ENCODE measurements at regions of chr5 and their contacts with region 1.

Region 1: DNA sequence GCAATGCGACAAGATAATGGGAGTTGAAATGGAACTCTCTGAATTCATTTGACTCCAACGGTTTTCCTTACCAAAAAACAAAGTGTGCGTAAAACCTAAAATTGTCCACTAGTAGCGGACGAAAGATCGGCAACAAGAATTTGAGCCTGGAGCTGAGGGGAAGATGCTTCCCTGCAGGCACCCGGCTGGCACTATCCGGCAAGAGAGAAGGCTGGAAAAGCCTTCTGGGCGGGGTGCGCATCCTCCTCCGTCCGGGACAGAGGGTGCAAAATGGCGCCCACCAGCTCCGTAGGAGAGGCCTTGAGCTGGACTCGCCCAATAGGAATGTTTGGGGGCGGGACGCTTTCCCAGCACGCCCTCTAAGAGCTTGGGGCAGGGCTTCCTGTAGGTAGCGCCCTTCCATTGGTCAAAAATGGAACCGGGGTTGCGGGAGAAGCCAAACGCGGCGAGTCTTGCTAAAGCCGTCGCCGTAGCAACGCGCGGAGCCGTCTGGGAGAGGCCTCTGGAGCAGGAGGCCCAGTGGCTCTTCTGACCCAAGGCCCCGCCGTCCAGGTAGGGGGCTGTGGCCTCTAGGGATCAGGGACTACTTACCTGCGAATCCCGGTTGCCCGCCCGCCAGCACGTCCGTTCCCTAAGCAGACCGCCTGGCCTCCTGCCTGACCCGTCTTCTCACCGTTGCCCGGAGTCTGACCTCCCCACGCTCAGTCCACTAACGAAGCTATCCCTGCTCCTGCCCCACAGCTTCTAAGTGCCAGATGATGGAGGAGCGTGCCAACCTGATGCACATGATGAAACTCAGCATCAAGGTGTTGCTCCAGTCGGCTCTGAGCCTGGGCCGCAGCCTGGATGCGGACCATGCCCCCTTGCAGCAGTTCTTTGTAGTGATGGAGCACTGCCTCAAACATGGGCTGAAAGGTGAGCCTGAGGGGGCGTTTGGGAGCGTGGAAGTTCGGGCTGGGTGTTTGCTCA is 9.2 kb downstream of the RUFY1 start:
- DNase-seq: peak; percentile 97 to 99 (median 99)
- ATAC-seq: peak; percentile 99 to 100 (median 100)
- H3K4me3 ChIP-seq: peak overlapping the region; percentile 31 to 67 (median 36)
- H3K27ac ChIP-seq: peak overlapping the region; percentile 0 to 71 (median 62)
- H3K4me1 ChIP-seq: peaks cover 0 to 5% (median 0%) of the 10 kb centered on the region in 4 donors
- H3K27me3 ChIP-seq: no peaks in the 10 kb centered on the region
- CTCF ChIP-seq: peak in 2 of 4 donors; percentile 28 to 32
- POLR2A ChIP-seq: peak; percentile 86

Region 2: GRCh38 chr5:179509239-179509638 is 50.3 kb before region 1 on chr5:
- intact Hi-C with region 1: no loop called
- DNase-seq: no peak
- ATAC-seq: no peak
- H3K4me3 ChIP-seq: no peak overlapping the region
- H3K27ac ChIP-seq: no peak overlapping the region
- H3K4me1 ChIP-seq: peaks cover 0 to 5% (median 1%) of the 10 kb centered on the region in 4 donors
- H3K27me3 ChIP-seq: no peaks in the 10 kb centered on the region
- CTCF ChIP-seq: no peak
- POLR2A ChIP-seq: no peak

Region 3: GRCh38 chr5:179613460-179614071 is 54.0 kb after region 1 on chr5:
- intact Hi-C with region 1: loop called in 1 of 2 experiments (anchors 10 kb)
- DNase-seq: no peak
- ATAC-seq: no peak
- H3K4me3 ChIP-seq: no peak overlapping the region
- H3K27ac ChIP-seq: no peak overlapping the region
- H3K4me1 ChIP-seq: peaks cover 0 to 33% (median 3%) of the 10 kb centered on the region in 4 donors
- H3K27me3 ChIP-seq: no peaks in the 10 kb centered on the region
- CTCF ChIP-seq: no peak
- POLR2A ChIP-seq: peak; percentile 39

Measured in right lobe of liver (tissue), 6 donors.